GM13977 (cell line): ENCODE measurements at regions of chrX and their contacts with region 1.

Region 1: DNA sequence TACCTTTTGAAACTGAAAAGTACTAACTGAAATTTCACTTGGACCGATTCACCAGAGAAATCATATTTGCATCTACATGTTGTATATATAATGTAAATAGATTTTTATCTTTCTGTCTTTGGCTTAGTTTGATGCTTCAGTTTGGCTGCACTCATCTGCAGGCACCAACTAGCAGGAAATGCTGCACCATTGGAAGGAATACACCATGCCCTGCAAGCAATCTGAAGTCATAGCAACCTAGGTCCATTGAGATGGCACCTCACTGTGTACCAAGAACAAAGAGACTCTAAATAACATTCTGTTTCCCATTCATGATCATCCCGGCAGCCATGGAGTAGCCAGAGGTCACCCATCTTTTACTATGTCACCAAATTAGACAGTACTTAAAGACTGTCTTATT is 40.7 kb upstream of the HS6ST2 start:
- DNase-seq: no peak
- CTCF ChIP-seq: no peak

Region 2: DNA sequence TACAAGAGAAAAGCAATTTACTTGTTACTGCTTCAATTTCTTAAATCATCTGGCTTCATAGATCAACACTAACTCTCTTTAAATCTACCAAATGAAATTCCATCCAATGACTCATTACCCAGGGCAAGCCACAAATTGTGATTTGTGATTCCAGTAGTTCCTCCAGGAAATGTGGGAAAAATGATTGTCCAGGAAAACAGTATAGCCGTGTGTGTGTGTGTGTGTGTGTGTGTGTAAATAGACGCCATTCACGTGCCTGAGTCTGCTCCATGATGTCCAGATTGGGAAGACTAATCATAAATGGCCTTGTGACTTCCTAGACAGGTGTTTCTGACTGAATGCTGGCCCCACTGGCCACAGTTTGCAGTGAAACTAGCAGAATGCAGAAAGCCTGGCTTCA is 162.0 kb before region 1 on chrX:
- in situ Hi-C with region 1: no loop called
- DNase-seq: no peak
- CTCF ChIP-seq: no peak

Region 3: GRCh38 chrX:133670383-133670782 is 671.2 kb after region 1 on chrX:
- in situ Hi-C with region 1: loop called (anchors 25 kb)
- DNase-seq: peak; percentile 40
- CTCF ChIP-seq: peak; percentile 68